IMR-90 (cell line): ENCODE measurements at regions of chr14 and their contacts with region 1.

Region 1: DNA sequence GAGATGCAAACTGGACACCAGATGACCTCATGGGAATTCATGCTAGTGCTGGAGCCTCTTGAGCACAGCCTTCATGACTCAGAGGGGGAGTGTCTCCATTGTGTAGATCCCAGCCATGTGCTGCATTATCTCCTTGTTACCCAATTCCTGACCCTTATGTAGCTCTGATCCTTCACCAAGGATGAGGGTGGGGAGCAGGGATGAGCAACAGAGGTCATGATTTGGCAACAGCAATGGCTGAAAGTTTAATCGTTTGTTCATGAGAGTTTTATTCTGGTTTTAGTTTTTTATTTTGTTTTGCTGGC is 9.5 kb upstream of the BDKRB1 start:
- DNase-seq: peak; percentile 99
- ATAC-seq: peak; percentile 78
- H3K4me3 ChIP-seq: no peak overlapping the region
- H3K27ac ChIP-seq: peak overlapping the region; percentile 58
- H3K4me1 ChIP-seq: peaks cover 19% of the 10 kb centered on the region
- H3K27me3 ChIP-seq: no peaks in the 10 kb centered on the region
- CTCF ChIP-seq: peak; percentile 25; the same call in 1 of the 2 replicates
- POLR2A ChIP-seq: no peak
- RAD21 ChIP-seq: peak; percentile 46

Region 2: GRCh38 chr14:96235426-96235825 is 11.1 kb before region 1 on chr14:
- CTCF ChIA-PET with region 1: no interaction called
- POLR2A ChIA-PET with region 1: interaction called, 24 read pairs
- dilution Hi-C with region 1: no loop called
- in situ Hi-C with region 1: no loop called
- intact Hi-C with region 1: no loop called
- DNase-seq: no peak
- ATAC-seq: no peak
- H3K4me3 ChIP-seq: no peak overlapping the region
- H3K27ac ChIP-seq: no peak overlapping the region
- H3K4me1 ChIP-seq: peaks cover 14% of the 10 kb centered on the region
- H3K27me3 ChIP-seq: no peaks in the 10 kb centered on the region
- CTCF ChIP-seq: no peak
- POLR2A ChIP-seq: no peak
- RAD21 ChIP-seq: no peak

Region 3: GRCh38 chr14:96400495-96400894 is 154.0 kb after region 1 on chr14:
- CTCF ChIA-PET with region 1: no interaction called
- POLR2A ChIA-PET with region 1: no interaction called
- dilution Hi-C with region 1: no loop called
- in situ Hi-C with region 1: no loop called
- intact Hi-C with region 1: no loop called
- DNase-seq: no peak
- ATAC-seq: no peak
- H3K4me3 ChIP-seq: no peak overlapping the region
- H3K27ac ChIP-seq: no peak overlapping the region
- H3K4me1 ChIP-seq: no peaks in the 10 kb centered on the region
- H3K27me3 ChIP-seq: peaks cover 38% of the 10 kb centered on the region
- CTCF ChIP-seq: no peak
- POLR2A ChIP-seq: no peak
- RAD21 ChIP-seq: no peak